Endothelial cell of umbilical vein (primary cell): ENCODE measurements at regions of chr6 and their contacts with region 1.

Region 1: GRCh38 chr6:125314019-125314581 is 12.3 kb upstream of the HDDC2 start:
- DNase-seq: peak; percentile 62
- H3K4me3 ChIP-seq: no peak overlapping the region
- H3K27ac ChIP-seq: no peak overlapping the region
- H3K4me1 ChIP-seq: no peaks in the 10 kb centered on the region
- H3K27me3 ChIP-seq: peaks cover under 1 to 15% of the 10 kb centered on the region in 2 experiments
- CTCF ChIP-seq: peak; percentile 76 to 81
- POLR2A ChIP-seq: no peak

Region 2: DNA sequence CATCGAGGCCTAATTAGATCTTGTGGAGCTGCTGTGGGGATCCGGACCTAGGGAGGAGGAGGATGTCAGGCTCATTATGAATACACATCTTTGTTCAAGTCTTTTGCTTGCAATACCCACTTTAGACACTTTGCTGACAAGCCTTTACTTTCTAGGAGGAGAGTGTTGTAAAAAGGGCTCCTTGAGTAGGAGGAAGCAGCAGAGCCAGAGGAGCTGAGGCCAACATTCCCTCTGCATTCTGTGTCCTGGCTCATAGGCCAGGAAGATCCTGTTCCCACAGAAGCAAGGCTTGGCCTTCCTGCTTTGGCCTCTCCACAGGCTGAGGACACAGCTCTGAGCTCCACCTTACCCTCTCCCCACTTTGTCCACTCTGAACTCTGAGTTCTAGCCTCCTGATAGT is 93.4 kb before region 1 on chr6:
- CTCF ChIA-PET with region 1: no interaction called
- POLR2A ChIA-PET with region 1: no interaction called
- dilution Hi-C with region 1: no loop called
- intact Hi-C with region 1: no loop called
- DNase-seq: no peak
- H3K4me3 ChIP-seq: no peak overlapping the region
- H3K27ac ChIP-seq: no peak overlapping the region
- H3K4me1 ChIP-seq: no peaks in the 10 kb centered on the region
- H3K27me3 ChIP-seq: no peaks in the 10 kb centered on the region
- CTCF ChIP-seq: no peak
- POLR2A ChIP-seq: no peak

Region 3: GRCh38 chr6:125232476-125232875 is 81.6 kb before region 1 on chr6:
- CTCF ChIA-PET with region 1: no interaction called
- POLR2A ChIA-PET with region 1: no interaction called
- dilution Hi-C with region 1: no loop called
- intact Hi-C with region 1: no loop called
- DNase-seq: no peak
- H3K4me3 ChIP-seq: no peak overlapping the region
- H3K27ac ChIP-seq: no peak overlapping the region
- H3K4me1 ChIP-seq: no peaks in the 10 kb centered on the region
- H3K27me3 ChIP-seq: no peaks in the 10 kb centered on the region
- CTCF ChIP-seq: no peak
- POLR2A ChIP-seq: no peak

Region 4: DNA sequence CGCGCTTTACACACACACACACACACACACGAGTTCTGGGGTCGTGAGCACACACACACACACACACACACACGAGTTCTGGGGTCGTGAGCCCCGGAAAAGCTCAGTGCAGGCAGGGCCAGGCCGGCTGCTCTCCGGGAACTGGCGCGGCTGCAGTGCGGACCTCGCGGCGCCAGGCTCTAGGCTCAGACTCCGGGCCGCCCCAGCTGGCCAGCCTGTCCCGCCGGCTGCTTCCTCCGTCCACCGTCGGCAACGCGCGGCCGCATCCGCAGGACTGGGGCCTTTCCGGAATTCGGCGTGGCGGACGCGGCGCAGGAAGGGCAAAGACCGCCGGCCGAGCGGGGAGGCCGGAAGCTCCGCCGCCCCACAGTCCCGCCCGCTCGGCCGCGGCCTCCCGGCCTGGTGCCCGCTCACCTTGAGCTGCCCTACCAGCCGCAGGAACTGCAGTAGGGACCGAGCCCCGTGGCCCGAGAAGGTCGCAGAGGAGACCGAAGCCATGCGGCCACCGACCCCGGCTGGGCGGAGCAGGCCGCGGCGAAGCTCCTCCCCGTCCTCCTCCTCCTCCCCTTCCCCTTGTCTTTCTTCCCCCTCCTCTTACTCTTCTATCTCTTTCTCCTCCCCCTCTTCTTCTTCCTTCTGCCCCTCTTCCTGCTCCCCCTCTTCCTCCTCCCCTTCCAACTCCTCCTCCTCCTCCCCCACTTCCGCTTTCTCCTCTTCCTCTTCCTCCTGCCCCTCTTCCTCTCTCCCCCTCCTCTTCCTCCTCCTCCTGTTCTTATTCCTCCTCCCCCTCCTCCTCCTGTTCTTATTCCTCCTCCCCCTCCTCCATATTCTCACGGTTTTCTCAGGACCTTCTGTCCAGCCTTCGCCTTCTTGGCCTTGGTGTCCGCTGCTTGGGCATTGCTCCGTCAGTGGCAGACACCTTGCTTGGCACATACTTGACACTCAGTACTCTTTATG is 12.4 kb before region 1 on chr6 and contains the start of gene HDDC2:
- CTCF ChIA-PET with region 1: interaction called, 15 read pairs
- POLR2A ChIA-PET with region 1: no interaction called
- dilution Hi-C with region 1: no loop called
- intact Hi-C with region 1: no loop called
- DNase-seq: peak; percentile 78
- H3K4me3 ChIP-seq: peak within 1 kb of the TSS; percentile 10 to 56 (median 47)
- H3K27ac ChIP-seq: peak within 1 kb of the TSS; percentile 72
- H3K4me1 ChIP-seq: peaks cover 10% of the 10 kb centered on the region
- H3K27me3 ChIP-seq: peaks cover 8 to 12% of the 10 kb centered on the region in 2 experiments
- CTCF ChIP-seq: no peak
- POLR2A ChIP-seq: peak; percentile 49
- total RNA-seq, gene HDDC2: 12.6 and 13.6 TPM in 2 replicates

Region 5: GRCh38 chr6:125512621-125513020 is 198.5 kb after region 1 on chr6:
- CTCF ChIA-PET with region 1: no interaction called
- POLR2A ChIA-PET with region 1: no interaction called
- dilution Hi-C with region 1: no loop called
- intact Hi-C with region 1: loop called (anchors 2 kb)
- DNase-seq: no peak
- H3K4me3 ChIP-seq: no peak overlapping the region
- H3K27ac ChIP-seq: no peak overlapping the region
- H3K4me1 ChIP-seq: no peaks in the 10 kb centered on the region
- H3K27me3 ChIP-seq: peaks cover 0 to 5% of the 10 kb centered on the region in 2 experiments
- CTCF ChIP-seq: peak; percentile 12 to 22
- POLR2A ChIP-seq: no peak

Region 6: GRCh38 chr6:125611573-125612344 is 297.7 kb after region 1 on chr6:
- CTCF ChIA-PET with region 1: no interaction called
- POLR2A ChIA-PET with region 1: no interaction called
- dilution Hi-C with region 1: no loop called
- intact Hi-C with region 1: loop called (anchors 5 kb)
- DNase-seq: peak; percentile 96
- H3K4me3 ChIP-seq: peak overlapping the region in 1 of 3 experiments; percentile 4
- H3K27ac ChIP-seq: peak overlapping the region; percentile 62
- H3K4me1 ChIP-seq: peaks cover 17% of the 10 kb centered on the region
- H3K27me3 ChIP-seq: peaks cover 0 to 9% of the 10 kb centered on the region in 2 experiments
- CTCF ChIP-seq: no peak
- POLR2A ChIP-seq: no peak

Region 7: DNA sequence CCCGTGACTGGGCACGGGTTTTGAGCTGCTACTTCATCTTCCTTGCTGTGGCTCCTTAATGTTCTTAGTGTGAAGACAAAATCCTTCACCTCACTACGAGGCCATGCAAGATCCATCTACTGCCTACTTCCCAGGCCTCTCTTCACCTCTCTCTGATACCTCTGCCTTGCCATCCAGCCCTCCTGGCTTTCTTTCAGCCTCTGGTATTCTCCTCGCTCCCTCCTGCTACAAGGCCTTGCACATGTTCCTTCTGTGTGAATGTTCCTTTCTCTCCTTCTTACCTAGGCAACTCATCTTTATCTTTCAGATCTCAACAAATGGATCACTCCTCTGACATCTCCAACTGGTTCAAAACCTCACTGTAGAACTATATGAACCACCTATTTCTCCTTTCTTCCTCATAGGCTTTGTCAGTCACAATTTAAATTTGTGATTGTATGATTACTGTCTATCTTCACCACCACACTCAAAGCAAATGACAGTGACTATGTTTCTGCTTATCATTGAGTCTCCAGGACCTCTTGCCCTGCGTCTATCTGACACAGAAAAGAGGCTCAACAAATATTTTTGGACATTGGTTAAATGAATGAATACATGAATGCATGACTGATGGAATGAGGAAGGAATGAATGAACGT is 455.2 kb after region 1 on chr6:
- CTCF ChIA-PET with region 1: interaction called, 114 read pairs
- POLR2A ChIA-PET with region 1: no interaction called
- dilution Hi-C with region 1: loop called (anchors 10 kb)
- intact Hi-C with region 1: loop called (anchors 1 kb)
- DNase-seq: no peak
- H3K4me3 ChIP-seq: no peak overlapping the region
- H3K27ac ChIP-seq: no peak overlapping the region
- H3K4me1 ChIP-seq: no peaks in the 10 kb centered on the region
- H3K27me3 ChIP-seq: peaks cover 4 to 19% of the 10 kb centered on the region in 2 experiments
- CTCF ChIP-seq: no peak
- POLR2A ChIP-seq: no peak

Region 8: GRCh38 chr6:125974214-125974866 is 660.2 kb after region 1 on chr6:
- CTCF ChIA-PET with region 1: interaction called, 16 read pairs
- POLR2A ChIA-PET with region 1: no interaction called
- dilution Hi-C with region 1: no loop called
- intact Hi-C with region 1: loop called (anchors 1 kb)
- DNase-seq: peak; percentile 73
- H3K4me3 ChIP-seq: no peak overlapping the region
- H3K27ac ChIP-seq: no peak overlapping the region
- H3K4me1 ChIP-seq: no peaks in the 10 kb centered on the region
- H3K27me3 ChIP-seq: no peaks in the 10 kb centered on the region
- CTCF ChIP-seq: peak; percentile 19 to 33
- POLR2A ChIP-seq: no peak